Left ventricle myocardium superior (tissue), 1 donor: ENCODE measurements at regions of chr18 and their contacts with region 1.

Region 1: GRCh38 chr18:2706903-2707302 is 51.4 kb downstream of the SMCHD1 start:
- DNase-seq: no peak
- ATAC-seq: no peak

Region 2: DNA sequence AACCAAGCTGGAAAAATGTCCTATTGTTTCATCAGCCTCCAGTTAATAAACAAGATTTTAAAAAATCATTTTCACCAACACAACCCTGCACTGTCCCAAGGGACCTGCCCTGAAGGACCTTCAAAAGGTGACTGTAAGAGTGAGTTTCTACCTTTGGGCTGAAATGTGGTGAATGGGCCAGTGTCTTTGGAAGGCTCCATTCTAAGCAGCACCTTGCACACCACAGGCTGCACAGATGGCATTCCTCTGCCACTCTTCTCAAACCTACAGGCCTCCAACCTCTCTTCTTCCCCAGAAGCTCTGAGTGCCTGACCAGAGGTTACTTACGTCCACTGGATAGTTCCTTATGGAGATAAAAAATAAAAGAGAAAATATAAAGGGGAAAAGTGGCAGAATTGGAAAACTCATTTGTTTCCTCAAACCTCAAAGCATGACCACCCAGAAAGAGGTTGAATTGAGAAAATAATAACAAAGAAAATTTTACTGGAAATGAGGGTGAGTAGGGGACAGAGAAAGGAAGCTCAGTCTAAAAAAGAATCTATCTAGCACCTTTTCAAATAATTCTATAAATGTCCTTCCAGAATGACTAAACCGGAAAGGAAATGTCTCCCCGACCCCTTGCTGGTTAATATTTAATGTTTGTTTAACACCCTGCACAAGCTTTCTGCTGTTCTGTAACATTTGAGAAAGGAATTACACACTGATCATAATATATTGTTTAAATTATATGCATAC is 311.3 kb before region 1 on chr18:
- intact Hi-C with region 1: no loop called
- DNase-seq: no peak
- ATAC-seq: no peak

Region 3: GRCh38 chr18:2741651-2742050 is 34.7 kb after region 1 on chr18:
- intact Hi-C with region 1: loop called (anchors 5 kb)
- DNase-seq: no peak
- ATAC-seq: no peak